ENCODE measurements at regions of chr13 and their contacts with region 1.

Region 1: GRCh38 chr13:80070024-80070703 is 270.8 kb downstream of the SPRY2 start:
- DNase-seq: no peak
- H3K27ac ChIP-seq: no peak overlapping the region
- CTCF ChIP-seq: no peak

Region 2: GRCh38 chr13:80173224-80173623 is 103.1 kb after region 1 on chr13:
- CTCF ChIA-PET with region 1: interaction called, 12 read pairs
- POLR2A ChIA-PET with region 1: no interaction called
- DNase-seq: no peak
- H3K27ac ChIP-seq: no peak overlapping the region
- CTCF ChIP-seq: no peak